OCI-LY7 (cell line): ENCODE measurements at regions of chr20 and their contacts with region 1.

Region 1: GRCh38 chr20:1392823-1393506 is at the start of gene FKBP1A:
- DNase-seq: peak; percentile 95
- H3K4me3 ChIP-seq: peak within 1 kb of the TSS; percentile 91
- H3K27ac ChIP-seq: peak within 1 kb of the TSS; percentile 39
- H3K4me1 ChIP-seq: peaks cover 51% of the 10 kb centered on the region
- CTCF ChIP-seq: no peak
- total RNA-seq, gene FKBP1A: 83.2 and 99.0 TPM in 2 replicates

Region 2: GRCh38 chr20:1313236-1313964 is 79.6 kb before region 1 on chr20:
- CTCF ChIA-PET with region 1: interaction called, 3 read pairs
- POLR2A ChIA-PET with region 1: no interaction called
- intact Hi-C with region 1: loop called (anchors 1 kb)
- DNase-seq: peak; percentile 58
- H3K4me3 ChIP-seq: no peak overlapping the region
- H3K27ac ChIP-seq: no peak overlapping the region
- H3K4me1 ChIP-seq: peaks cover 4% of the 10 kb centered on the region
- CTCF ChIP-seq: peak; percentile 98

Region 3: GRCh38 chr20:1375515-1375914 is 17.4 kb before region 1 on chr20:
- CTCF ChIA-PET with region 1: interaction called, 10 read pairs
- POLR2A ChIA-PET with region 1: interaction called, 11 read pairs
- intact Hi-C with region 1: no loop called
- DNase-seq: no peak
- H3K4me3 ChIP-seq: no peak overlapping the region
- H3K27ac ChIP-seq: no peak overlapping the region
- H3K4me1 ChIP-seq: peaks cover 23% of the 10 kb centered on the region
- CTCF ChIP-seq: no peak

Region 4: DNA sequence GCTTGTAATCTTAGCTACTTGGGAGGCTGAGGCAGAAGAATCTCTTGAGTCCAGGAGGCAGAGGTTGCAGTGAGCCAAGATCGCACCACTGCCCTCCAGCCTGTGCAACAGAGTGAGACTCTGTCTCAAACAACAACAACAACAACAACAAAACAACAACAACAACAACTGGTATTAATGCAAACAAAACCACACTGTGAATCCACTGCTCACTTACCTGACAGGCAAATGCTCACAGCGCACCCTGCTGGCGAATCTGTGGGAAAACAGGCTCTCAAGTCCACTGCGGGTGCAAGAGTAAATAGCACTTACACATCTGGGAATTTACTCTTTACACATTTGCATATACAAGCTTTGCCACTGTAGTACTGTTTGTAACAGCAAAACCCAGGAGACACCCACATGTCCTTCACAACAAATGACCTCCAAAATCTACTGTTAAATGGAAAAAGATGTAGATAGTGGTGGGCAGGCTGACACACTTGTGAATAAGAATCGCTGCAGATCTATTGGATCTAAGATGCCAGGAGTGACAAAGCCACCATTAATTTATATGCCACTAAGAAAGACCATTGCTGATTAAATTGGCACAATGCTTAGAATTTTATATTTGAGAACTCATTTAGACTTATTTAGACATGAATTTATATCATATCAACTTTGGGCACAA is 44.4 kb after region 1 on chr20:
- CTCF ChIA-PET with region 1: interaction called, 4 read pairs
- POLR2A ChIA-PET with region 1: interaction called, 5 read pairs
- intact Hi-C with region 1: loop called (anchors 1 kb)
- DNase-seq: peak; percentile 80
- H3K4me3 ChIP-seq: no peak overlapping the region
- H3K27ac ChIP-seq: no peak overlapping the region
- H3K4me1 ChIP-seq: peaks cover 19% of the 10 kb centered on the region
- CTCF ChIP-seq: peak; percentile 90

Region 5: GRCh38 chr20:1503564-1504227 is 110.7 kb after region 1 on chr20:
- CTCF ChIA-PET with region 1: no interaction called
- POLR2A ChIA-PET with region 1: no interaction called
- intact Hi-C with region 1: loop called (anchors 1 kb)
- DNase-seq: peak; percentile 86
- H3K4me3 ChIP-seq: no peak overlapping the region
- H3K27ac ChIP-seq: no peak overlapping the region
- H3K4me1 ChIP-seq: no peaks in the 10 kb centered on the region
- CTCF ChIP-seq: peak; percentile 100